Endothelial cell of umbilical vein (primary cell): ENCODE measurements at regions of chr20 and their contacts with region 1.

Region 1: GRCh38 chr20:2919518-2920245 is 46.4 kb downstream of the PTPRA start:
- DNase-seq: no peak
- H3K4me3 ChIP-seq: no peak overlapping the region
- H3K27ac ChIP-seq: no peak overlapping the region
- H3K4me1 ChIP-seq: peaks cover 6% of the 10 kb centered on the region
- H3K27me3 ChIP-seq: no peaks in the 10 kb centered on the region
- CTCF ChIP-seq: no peak
- POLR2A ChIP-seq: no peak

Region 2: DNA sequence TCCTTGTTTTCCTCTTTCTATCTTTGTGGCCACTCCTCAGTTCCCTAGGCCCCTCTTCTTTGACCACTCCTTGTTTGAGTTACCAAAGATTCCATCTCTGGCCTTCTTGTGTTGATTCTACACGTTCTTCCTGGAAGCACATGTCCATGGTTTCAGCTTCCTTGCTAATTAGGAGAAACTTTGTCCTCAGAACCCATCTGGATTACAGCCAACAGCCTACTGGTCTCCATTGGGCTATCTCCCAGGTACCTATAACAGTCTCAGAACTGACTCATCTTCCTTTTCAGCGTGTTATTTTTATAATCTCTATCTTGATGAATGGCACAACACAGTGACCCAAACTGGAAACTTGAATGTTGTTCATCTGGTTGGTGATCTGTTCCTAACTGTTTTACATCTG is 28.9 kb before region 1 on chr20:
- CTCF ChIA-PET with region 1: no interaction called
- POLR2A ChIA-PET with region 1: no interaction called
- dilution Hi-C with region 1: no loop called
- intact Hi-C with region 1: no loop called
- DNase-seq: peak; percentile 47
- H3K4me3 ChIP-seq: no peak overlapping the region
- H3K27ac ChIP-seq: no peak overlapping the region
- H3K4me1 ChIP-seq: peaks cover 17% of the 10 kb centered on the region
- H3K27me3 ChIP-seq: no peaks in the 10 kb centered on the region
- CTCF ChIP-seq: no peak
- POLR2A ChIP-seq: no peak

Region 3: GRCh38 chr20:2967841-2968240 is 48.2 kb after region 1 on chr20:
- CTCF ChIA-PET with region 1: no interaction called
- POLR2A ChIA-PET with region 1: no interaction called
- dilution Hi-C with region 1: no loop called
- intact Hi-C with region 1: loop called (anchors 2 kb)
- DNase-seq: no peak
- H3K4me3 ChIP-seq: no peak overlapping the region
- H3K27ac ChIP-seq: no peak overlapping the region
- H3K4me1 ChIP-seq: no peaks in the 10 kb centered on the region
- H3K27me3 ChIP-seq: no peaks in the 10 kb centered on the region
- CTCF ChIP-seq: no peak
- POLR2A ChIP-seq: no peak